Activated B cell treated with CpG ODN at 0.5 μM for 24 hours (primary cell): ENCODE measurements at regions of chr12 and their contacts with region 1.

Region 1: GRCh38 chr12:27243804-27244683 is at the start of gene STK38L:
- DNase-seq: peak; percentile 97
- ATAC-seq: peak; percentile 97
- H3K4me3 Mint-ChIP-seq: peak within 1 kb of the TSS; percentile 98
- H3K27ac Mint-ChIP-seq: peak within 1 kb of the TSS; percentile 95
- H3K4me1 Mint-ChIP-seq: peaks cover 46% of the 10 kb centered on the region
- H3K27me3 Mint-ChIP-seq: no peaks in the 10 kb centered on the region
- CTCF ChIP-seq: no peak
- total RNA-seq, gene STK38L: 24.2 and 26.3 TPM in 2 replicates

Region 2: GRCh38 chr12:27096420-27096819 is 147.6 kb before region 1 on chr12:
- CTCF ChIA-PET with region 1: no interaction called
- POLR2A ChIA-PET with region 1: no interaction called
- intact Hi-C with region 1: no loop called
- DNase-seq: no peak
- ATAC-seq: no peak
- H3K4me3 Mint-ChIP-seq: no peak overlapping the region
- H3K27ac Mint-ChIP-seq: no peak overlapping the region
- H3K4me1 Mint-ChIP-seq: peaks cover 38% of the 10 kb centered on the region
- H3K27me3 Mint-ChIP-seq: no peaks in the 10 kb centered on the region
- CTCF ChIP-seq: no peak

Region 3: DNA sequence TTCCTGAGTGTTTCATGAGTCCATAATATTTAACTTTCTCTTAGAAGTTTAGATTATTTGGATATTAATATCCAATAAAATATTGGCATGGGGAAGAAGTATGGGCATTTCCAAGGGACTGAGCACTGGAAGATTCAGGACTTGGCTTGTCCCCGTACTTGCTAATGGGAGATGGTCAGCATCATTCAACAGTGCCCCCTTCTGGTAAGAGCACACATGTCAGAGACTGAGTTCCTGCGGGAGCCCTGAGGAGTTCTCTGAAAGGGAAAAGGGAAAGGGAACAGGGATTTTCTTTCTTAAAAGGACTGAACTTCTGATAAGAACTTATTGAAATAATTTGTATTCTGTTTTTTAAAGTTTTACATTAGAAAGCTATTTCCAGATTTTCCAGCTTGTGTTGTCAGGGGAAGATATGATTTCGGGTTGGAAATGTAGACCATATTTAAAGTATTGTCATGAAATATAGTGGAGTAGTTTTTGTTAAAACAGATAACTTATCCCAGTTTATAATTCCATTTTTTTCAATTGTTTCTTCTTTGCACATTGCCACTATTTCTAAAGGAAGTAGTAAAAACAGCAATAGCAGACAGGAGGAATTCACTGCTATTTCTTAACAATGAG is 101.8 kb before region 1 on chr12:
- CTCF ChIA-PET with region 1: no interaction called
- POLR2A ChIA-PET with region 1: no interaction called
- intact Hi-C with region 1: loop called (anchors 2 kb)
- DNase-seq: no peak
- ATAC-seq: peak; percentile 76
- H3K4me3 Mint-ChIP-seq: no peak overlapping the region
- H3K27ac Mint-ChIP-seq: no peak overlapping the region
- H3K4me1 Mint-ChIP-seq: peaks cover 12% of the 10 kb centered on the region
- H3K27me3 Mint-ChIP-seq: no peaks in the 10 kb centered on the region
- CTCF ChIP-seq: peak; percentile 43

Region 4: DNA sequence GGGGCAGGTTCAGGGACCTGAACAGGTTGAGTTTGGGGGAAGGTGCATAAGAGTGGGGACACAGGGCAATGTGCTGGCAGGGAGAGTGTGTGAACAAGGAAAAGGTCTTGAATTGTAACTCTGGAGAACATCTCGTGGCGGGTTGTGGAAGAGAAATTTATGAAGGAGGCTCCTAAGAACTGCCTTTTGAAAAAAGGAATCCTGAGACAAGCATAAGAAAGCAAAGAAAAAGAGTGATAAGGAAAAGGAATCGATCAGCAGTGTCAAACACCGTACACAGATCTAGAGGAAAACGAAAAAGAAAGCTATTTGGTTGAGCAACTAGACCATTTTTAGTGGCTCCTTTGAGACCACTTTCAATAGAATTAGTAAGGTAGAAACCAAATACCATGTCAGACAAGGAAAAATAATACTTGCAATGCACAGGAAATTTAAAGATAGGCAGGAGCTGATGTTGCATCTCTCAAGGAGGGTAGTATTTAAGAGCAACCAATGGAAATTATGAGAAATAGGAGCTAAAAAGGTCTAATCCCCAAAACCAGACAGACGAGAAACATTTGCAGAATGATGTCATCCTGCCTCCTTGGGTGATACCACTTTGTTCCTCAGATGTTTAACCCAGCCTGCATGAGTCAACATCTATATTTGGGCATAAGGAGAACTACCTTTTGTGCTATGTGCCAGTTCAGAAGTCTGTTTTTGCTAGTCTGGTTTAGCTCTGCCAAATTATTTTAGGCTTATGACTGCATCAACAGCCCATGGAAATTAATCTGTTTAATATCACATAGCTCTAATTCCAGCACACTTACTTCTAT is 64.4 kb before region 1 on chr12:
- CTCF ChIA-PET with region 1: interaction called, 3 read pairs
- POLR2A ChIA-PET with region 1: interaction called, 4 read pairs
- intact Hi-C with region 1: loop called (anchors 1 kb)
- DNase-seq: no peak
- ATAC-seq: peak; percentile 97
- H3K4me3 Mint-ChIP-seq: peak overlapping the region; percentile 46
- H3K27ac Mint-ChIP-seq: peak overlapping the region; percentile 65
- H3K4me1 Mint-ChIP-seq: peaks cover 18% of the 10 kb centered on the region
- H3K27me3 Mint-ChIP-seq: no peaks in the 10 kb centered on the region
- CTCF ChIP-seq: no peak

Region 5: GRCh38 chr12:27220057-27220987 is 23.7 kb before region 1 on chr12:
- CTCF ChIA-PET with region 1: interaction called, 5 read pairs
- POLR2A ChIA-PET with region 1: interaction called, 13 read pairs
- intact Hi-C with region 1: loop called (anchors 2 kb)
- DNase-seq: no peak
- ATAC-seq: peak; percentile 81
- H3K4me3 Mint-ChIP-seq: peak overlapping the region; percentile 53
- H3K27ac Mint-ChIP-seq: peak overlapping the region; percentile 84
- H3K4me1 Mint-ChIP-seq: peaks cover 39% of the 10 kb centered on the region
- H3K27me3 Mint-ChIP-seq: no peaks in the 10 kb centered on the region
- CTCF ChIP-seq: no peak

Region 6: GRCh38 chr12:27332407-27333301 is 88.6 kb after region 1 on chr12 and contains the start of gene BMAL2:
- CTCF ChIA-PET with region 1: no interaction called
- POLR2A ChIA-PET with region 1: no interaction called
- intact Hi-C with region 1: loop called (anchors 2 kb)
- DNase-seq: peak; percentile 46
- ATAC-seq: peak; percentile 60
- H3K4me3 Mint-ChIP-seq: peak within 1 kb of the TSS; percentile 89
- H3K27ac Mint-ChIP-seq: no peak within 1 kb of the TSS
- H3K4me1 Mint-ChIP-seq: peaks cover 25% of the 10 kb centered on the region
- H3K27me3 Mint-ChIP-seq: peaks cover 24% of the 10 kb centered on the region
- CTCF ChIP-seq: no peak
- total RNA-seq, gene BMAL2: 4.2 and 5.4 TPM in 2 replicates

Region 7: GRCh38 chr12:27710592-27711316 is 466.7 kb after region 1 on chr12 and contains the start of gene MRPS35:
- CTCF ChIA-PET with region 1: no interaction called
- POLR2A ChIA-PET with region 1: no interaction called
- intact Hi-C with region 1: loop called (anchors 2 kb)
- DNase-seq: peak; percentile 92
- ATAC-seq: peak; percentile 99
- H3K4me3 Mint-ChIP-seq: peak within 1 kb of the TSS; percentile 99
- H3K27ac Mint-ChIP-seq: peak within 1 kb of the TSS; percentile 99
- H3K4me1 Mint-ChIP-seq: peaks cover 29% of the 10 kb centered on the region
- H3K27me3 Mint-ChIP-seq: no peaks in the 10 kb centered on the region
- CTCF ChIP-seq: no peak
- total RNA-seq, gene MRPS35: 36.2 and 36.8 TPM in 2 replicates